AG04450 (cell line): ENCODE measurements at regions of chr16 and their contacts with region 1.

Region 1: GRCh38 chr16:66650707-66651473 is 45.7 kb downstream of the CMTM4 start:
- DNase-seq: peak; percentile 55
- H3K4me3 ChIP-seq: peak overlapping the region; percentile 5; the same call in 1 of the 2 replicates
- H3K27ac ChIP-seq: no peak overlapping the region
- H3K27me3 ChIP-seq: no peaks in the 10 kb centered on the region
- CTCF ChIP-seq: peak; percentile 96

Region 2: DNA sequence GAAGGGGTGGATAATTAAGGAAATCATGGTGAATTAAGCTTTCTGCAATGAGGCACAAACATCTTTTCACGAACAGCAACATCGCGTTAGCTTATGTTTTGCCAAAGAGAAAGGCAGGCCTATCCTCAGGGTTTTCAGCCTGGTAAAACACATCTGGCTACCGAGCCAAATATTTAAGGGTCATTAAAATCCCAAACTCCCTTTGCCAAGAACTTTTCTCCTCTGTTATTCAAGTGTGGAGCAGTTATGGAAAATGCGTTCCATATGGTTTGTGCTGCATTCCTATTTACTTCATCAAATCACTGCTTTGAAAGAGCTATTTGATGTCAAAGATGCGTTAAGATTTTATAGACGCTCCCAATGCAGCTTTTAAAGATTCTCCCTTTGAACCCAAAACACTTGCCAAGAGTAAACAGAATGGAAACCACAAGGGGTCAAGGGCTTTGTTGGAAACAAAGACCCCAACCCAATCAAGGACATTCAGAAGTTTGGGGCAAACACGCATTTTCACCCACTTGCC is 592.7 kb before region 1 on chr16:
- CTCF ChIA-PET with region 1: no interaction called
- POLR2A ChIA-PET with region 1: no interaction called
- DNase-seq: peak; percentile 62
- H3K4me3 ChIP-seq: no peak overlapping the region
- H3K27ac ChIP-seq: peak overlapping the region; percentile 33
- H3K27me3 ChIP-seq: peaks cover 2% of the 10 kb centered on the region
- CTCF ChIP-seq: no peak

Region 3: GRCh38 chr16:66457888-66458287 is 193.0 kb before region 1 on chr16:
- CTCF ChIA-PET with region 1: no interaction called
- POLR2A ChIA-PET with region 1: no interaction called
- DNase-seq: no peak
- H3K4me3 ChIP-seq: no peak overlapping the region
- H3K27ac ChIP-seq: peak overlapping the region; percentile 21
- H3K27me3 ChIP-seq: peaks cover 31% of the 10 kb centered on the region
- CTCF ChIP-seq: no peak

Region 4: GRCh38 chr16:66629856-66630255 is 21.0 kb before region 1 on chr16:
- CTCF ChIA-PET with region 1: interaction called, 33 read pairs
- POLR2A ChIA-PET with region 1: interaction called, 3 read pairs
- DNase-seq: no peak
- H3K4me3 ChIP-seq: no peak overlapping the region
- H3K27ac ChIP-seq: no peak overlapping the region
- H3K27me3 ChIP-seq: no peaks in the 10 kb centered on the region
- CTCF ChIP-seq: no peak

Region 5: GRCh38 chr16:66695935-66696668 is 45.2 kb after region 1 on chr16:
- CTCF ChIA-PET with region 1: interaction called, 10 read pairs
- POLR2A ChIA-PET with region 1: no interaction called
- DNase-seq: no peak
- H3K4me3 ChIP-seq: peak overlapping the region; percentile 70
- H3K27ac ChIP-seq: no peak overlapping the region
- H3K27me3 ChIP-seq: peaks cover 5% of the 10 kb centered on the region
- CTCF ChIP-seq: no peak

Region 6: DNA sequence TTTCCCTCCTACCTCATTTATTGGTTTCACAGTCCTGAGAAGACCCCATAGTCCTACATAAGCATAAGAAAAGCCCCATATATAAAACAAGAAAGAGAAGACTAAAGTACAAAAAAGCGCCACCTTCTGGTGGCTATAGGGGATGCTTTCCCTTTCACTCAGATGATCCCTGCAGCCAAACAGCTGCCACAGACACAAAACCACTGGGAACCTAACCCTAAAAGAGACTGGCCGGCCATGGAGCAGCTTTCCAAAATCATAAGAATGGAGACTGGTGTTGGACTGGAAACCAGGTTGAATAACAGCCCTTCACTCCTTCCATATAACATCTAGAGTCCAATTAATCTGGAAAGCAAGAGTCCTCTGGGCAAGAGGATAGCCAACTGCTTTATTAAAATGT is 89.1 kb after region 1 on chr16:
- CTCF ChIA-PET with region 1: interaction called, 19 read pairs
- POLR2A ChIA-PET with region 1: interaction called, 3 read pairs
- DNase-seq: no peak
- H3K4me3 ChIP-seq: no peak overlapping the region
- H3K27ac ChIP-seq: no peak overlapping the region
- H3K27me3 ChIP-seq: no peaks in the 10 kb centered on the region
- CTCF ChIP-seq: peak; percentile 67